Ascending aorta (tissue), 2 donors: ENCODE measurements at regions of chr19 and their contacts with region 1.

Region 1: DNA sequence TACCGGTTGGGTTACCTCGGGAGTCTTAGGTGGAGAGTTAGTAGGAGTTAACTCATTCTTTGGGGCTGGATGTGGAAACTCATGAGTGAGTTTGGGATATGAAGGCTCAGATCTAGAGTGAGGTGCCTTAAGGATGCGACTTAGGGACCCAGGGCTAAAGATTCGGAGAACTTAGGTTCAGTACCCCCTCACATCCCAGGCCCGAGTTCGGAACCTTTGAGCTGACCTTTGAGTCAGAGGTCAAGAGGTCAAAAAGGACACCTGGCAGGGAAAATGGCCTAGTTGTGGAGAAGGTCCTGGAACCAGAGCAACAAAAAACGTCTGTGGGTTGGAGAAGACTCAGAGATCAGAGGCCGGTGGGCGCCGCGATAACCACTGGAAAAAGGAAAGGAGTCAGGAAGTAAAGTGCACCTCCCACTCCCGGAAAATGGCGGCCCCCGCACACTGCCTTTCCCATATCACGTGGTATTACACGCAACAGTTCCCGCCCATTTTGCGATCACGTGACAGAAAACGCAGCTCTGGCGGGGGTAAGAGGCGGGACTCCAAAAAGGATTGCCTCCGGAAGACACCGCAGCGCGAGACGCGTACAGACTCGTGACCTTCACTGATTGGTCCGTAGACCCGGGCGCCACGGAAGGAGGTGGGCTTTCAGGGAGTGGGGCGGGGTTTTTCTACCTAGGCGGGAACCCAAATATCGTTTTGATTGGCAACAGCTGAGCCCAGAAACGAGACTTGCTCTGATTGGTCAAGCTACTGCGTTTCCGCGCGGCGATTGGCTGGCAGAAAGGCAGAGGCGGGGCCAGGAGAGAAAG is at the start of gene ACTMAP:
- DNase-seq: peak; percentile 99 to 100
- H3K4me3 ChIP-seq: peak within 1 kb of the TSS; percentile 65 to 80
- H3K27ac ChIP-seq: peak within 1 kb of the TSS; percentile 89 to 93
- H3K4me1 ChIP-seq: peaks cover 12 to 32% of the 10 kb centered on the region in 2 donors
- H3K27me3 ChIP-seq: no peaks in the 10 kb centered on the region
- CTCF ChIP-seq: no peak
- total RNA-seq, gene ACTMAP: 8.3 TPM

Region 2: GRCh38 chr19:40294560-40294959 is 455.7 kb before region 1 on chr19:
- intact Hi-C with region 1: no loop called
- DNase-seq: no peak
- H3K4me3 ChIP-seq: no peak overlapping the region
- H3K27ac ChIP-seq: no peak overlapping the region
- H3K4me1 ChIP-seq: no peaks in the 10 kb centered on the region
- H3K27me3 ChIP-seq: no peaks in the 10 kb centered on the region
- CTCF ChIP-seq: no peak

Region 3: GRCh38 chr19:40690693-40691420 is 59.4 kb before region 1 on chr19:
- intact Hi-C with region 1: loop called (anchors 1 kb)
- DNase-seq: peak; percentile 71 to 97
- H3K4me3 ChIP-seq: peak overlapping the region; percentile 84 to 86
- H3K27ac ChIP-seq: peak overlapping the region; percentile 89 to 93
- H3K4me1 ChIP-seq: peaks cover 6 to 24% of the 10 kb centered on the region in 2 donors
- H3K27me3 ChIP-seq: no peaks in the 10 kb centered on the region
- CTCF ChIP-seq: no peak

Region 4: GRCh38 chr19:40777937-40778705 is 27.9 kb after region 1 on chr19 and contains the start of gene RAB4B:
- intact Hi-C with region 1: loop called (anchors 1 kb)
- DNase-seq: peak; percentile 99 to 100
- H3K4me3 ChIP-seq: peak within 1 kb of the TSS; percentile 81 to 91
- H3K27ac ChIP-seq: peak within 1 kb of the TSS; percentile 97 to 99
- H3K4me1 ChIP-seq: peaks cover 0 to 13% of the 10 kb centered on the region in 2 donors
- H3K27me3 ChIP-seq: no peaks in the 10 kb centered on the region
- CTCF ChIP-seq: no peak
- total RNA-seq, gene RAB4B: 56.8 TPM

Region 5: GRCh38 chr19:40798223-40798996 is 48.1 kb after region 1 on chr19:
- intact Hi-C with region 1: loop called (anchors 1 kb)
- DNase-seq: peak; percentile 100
- H3K4me3 ChIP-seq: peak overlapping the region; percentile 55 to 99
- H3K27ac ChIP-seq: peak overlapping the region; percentile 89 to 95
- H3K4me1 ChIP-seq: peaks cover 28 to 40% of the 10 kb centered on the region in 2 donors
- H3K27me3 ChIP-seq: no peaks in the 10 kb centered on the region
- CTCF ChIP-seq: peak; percentile 28 to 54 (median 48)

Region 6: GRCh38 chr19:41009700-41010235 is 259.5 kb after region 1 on chr19:
- intact Hi-C with region 1: no loop called
- DNase-seq: no peak
- H3K4me3 ChIP-seq: no peak overlapping the region
- H3K27ac ChIP-seq: no peak overlapping the region
- H3K4me1 ChIP-seq: no peaks in the 10 kb centered on the region
- H3K27me3 ChIP-seq: no peaks in the 10 kb centered on the region
- CTCF ChIP-seq: no peak